B cell (primary cell): ENCODE measurements at regions of chr22 and their contacts with region 1.

Region 1: DNA sequence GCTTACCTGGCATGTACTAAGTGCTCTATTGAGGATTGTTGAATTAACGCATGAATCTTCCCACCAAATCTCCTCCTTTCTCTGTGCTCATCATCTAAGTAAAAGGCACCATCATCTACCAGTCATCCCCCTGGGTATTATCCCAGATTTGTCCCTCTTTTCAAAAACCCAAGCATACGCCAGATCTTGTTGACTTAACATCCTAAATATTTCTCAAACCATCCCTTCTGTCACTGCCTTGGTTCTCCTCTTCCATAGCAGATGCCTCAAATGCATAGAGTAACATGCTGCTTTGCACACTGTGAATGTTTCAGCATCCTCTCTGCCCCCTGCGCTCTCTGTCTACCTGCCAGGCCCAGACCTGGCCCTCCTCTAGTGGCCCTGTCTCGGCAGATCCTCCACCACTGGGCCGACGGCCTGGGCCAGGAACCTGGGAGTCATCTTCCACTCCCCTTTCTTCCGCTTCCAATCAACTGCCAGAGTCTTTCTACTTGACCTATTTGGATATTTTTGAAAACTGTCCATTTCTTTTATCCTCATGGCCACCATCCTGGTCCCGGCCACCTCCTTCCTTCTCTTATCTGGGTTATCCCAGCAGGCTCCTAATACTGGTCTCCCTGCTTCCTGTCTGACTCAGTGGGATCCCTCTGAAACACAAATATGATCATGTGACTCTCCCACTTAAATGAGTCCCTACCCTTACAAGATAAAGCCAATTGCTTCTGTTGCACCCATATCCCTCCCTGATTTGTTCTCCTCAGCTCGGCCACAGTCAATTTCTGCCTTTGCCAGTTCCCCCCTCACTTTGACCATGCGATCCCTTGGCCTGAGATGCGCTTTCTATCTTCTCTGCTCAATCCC is 3.4 kb upstream of the TAB1 start:
- DNase-seq: no peak
- ATAC-seq: no peak
- H3K4me3 ChIP-seq: no peak overlapping the region
- H3K4me3 Mint-ChIP-seq: no peak overlapping the region
- H3K27ac ChIP-seq: no peak overlapping the region
- H3K27ac Mint-ChIP-seq: no peak overlapping the region
- H3K4me1 ChIP-seq: peaks cover 9 to 16% of the 10 kb centered on the region in 2 donors
- H3K4me1 Mint-ChIP-seq: peaks cover 15% of the 10 kb centered on the region
- H3K27me3 ChIP-seq: no peaks in the 10 kb centered on the region
- H3K27me3 Mint-ChIP-seq: no peaks in the 10 kb centered on the region
- CTCF ChIP-seq: no peak

Region 2: GRCh38 chr22:38843201-38843715 is 552.9 kb before region 1 on chr22:
- CTCF ChIA-PET with region 1: no interaction called
- POLR2A ChIA-PET with region 1: no interaction called
- intact Hi-C with region 1: no loop called
- DNase-seq: peak; percentile 77
- ATAC-seq: peak; percentile 78
- H3K4me3 ChIP-seq: peak overlapping the region in 2 of 5 experiments; percentile 23 to 29
- H3K4me3 Mint-ChIP-seq: peak overlapping the region; percentile 19
- H3K27ac ChIP-seq: no peak overlapping the region
- H3K27ac Mint-ChIP-seq: no peak overlapping the region
- H3K4me1 ChIP-seq: peaks cover 6 to 13% of the 10 kb centered on the region in 2 donors
- H3K4me1 Mint-ChIP-seq: peaks cover 11% of the 10 kb centered on the region
- H3K27me3 ChIP-seq: peaks cover 0 to 56% (median 27%) of the 10 kb centered on the region in 4 experiments
- H3K27me3 Mint-ChIP-seq: peaks cover 62% of the 10 kb centered on the region
- CTCF ChIP-seq: no peak

Region 3: DNA sequence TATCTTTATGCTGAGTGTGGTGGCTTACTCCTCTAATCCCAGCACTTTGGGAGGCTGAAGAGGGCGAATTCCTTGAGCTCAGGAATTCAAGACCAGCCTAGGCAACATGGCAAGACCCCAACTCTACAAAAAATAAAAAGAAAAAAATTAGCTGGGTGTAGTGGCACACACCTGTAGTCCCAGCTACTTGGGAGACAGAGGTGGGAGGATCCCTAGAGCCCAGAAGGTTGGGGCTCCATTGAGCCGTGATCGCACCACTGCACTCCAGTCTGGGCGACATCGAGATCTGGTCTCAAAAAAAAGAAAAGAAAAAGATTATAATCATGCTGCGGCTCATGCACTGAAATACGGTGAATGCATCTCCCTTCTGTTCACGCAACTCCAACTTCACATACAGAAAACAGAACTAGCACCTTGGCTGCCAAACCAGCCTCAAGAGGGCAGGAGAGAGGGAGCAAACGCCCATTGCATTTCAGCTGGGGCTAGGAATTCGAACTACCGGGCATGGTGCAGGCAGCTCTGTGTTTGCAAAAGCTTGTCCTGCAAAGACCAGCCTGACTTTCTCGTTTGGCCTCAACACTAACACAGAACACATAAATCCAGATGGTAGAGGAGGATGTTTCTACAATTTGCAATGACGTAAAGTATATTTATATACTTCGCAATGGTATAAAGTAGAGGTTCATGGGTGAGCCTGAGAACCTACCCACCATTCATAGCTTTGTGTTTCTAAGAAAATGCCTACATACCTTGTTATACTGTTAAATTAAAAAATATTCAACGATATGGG is 52.7 kb before region 1 on chr22:
- CTCF ChIA-PET with region 1: interaction called, 18 read pairs
- POLR2A ChIA-PET with region 1: no interaction called
- intact Hi-C with region 1: loop called (anchors 1 kb)
- DNase-seq: peak; percentile 76
- ATAC-seq: peak; percentile 90
- H3K4me3 ChIP-seq: no peak overlapping the region
- H3K4me3 Mint-ChIP-seq: no peak overlapping the region
- H3K27ac ChIP-seq: no peak overlapping the region
- H3K27ac Mint-ChIP-seq: no peak overlapping the region
- H3K4me1 ChIP-seq: peaks cover 6 to 8% of the 10 kb centered on the region in 2 donors
- H3K4me1 Mint-ChIP-seq: peaks cover 4% of the 10 kb centered on the region
- H3K27me3 ChIP-seq: peaks cover 0 to 10% (median 0%) of the 10 kb centered on the region in 4 experiments
- H3K27me3 Mint-ChIP-seq: peaks cover 10% of the 10 kb centered on the region
- CTCF ChIP-seq: peak; percentile 85

Region 4: GRCh38 chr22:39414886-39415285 is 18.7 kb after region 1 on chr22:
- CTCF ChIA-PET with region 1: interaction called, 11 read pairs
- POLR2A ChIA-PET with region 1: no interaction called
- intact Hi-C with region 1: no loop called
- DNase-seq: no peak
- ATAC-seq: no peak
- H3K4me3 ChIP-seq: no peak overlapping the region
- H3K4me3 Mint-ChIP-seq: no peak overlapping the region
- H3K27ac ChIP-seq: no peak overlapping the region
- H3K27ac Mint-ChIP-seq: no peak overlapping the region
- H3K4me1 ChIP-seq: peaks cover 8 to 16% of the 10 kb centered on the region in 2 donors
- H3K4me1 Mint-ChIP-seq: peaks cover 18% of the 10 kb centered on the region
- H3K27me3 ChIP-seq: no peaks in the 10 kb centered on the region
- H3K27me3 Mint-ChIP-seq: no peaks in the 10 kb centered on the region
- CTCF ChIP-seq: no peak

Region 5: GRCh38 chr22:39490135-39490798 is 94.1 kb after region 1 on chr22:
- CTCF ChIA-PET with region 1: interaction called, 10 read pairs
- POLR2A ChIA-PET with region 1: interaction called, 3 read pairs
- intact Hi-C with region 1: no loop called
- DNase-seq: peak; percentile 86
- ATAC-seq: peak; percentile 98
- H3K4me3 ChIP-seq: peak overlapping the region in 2 of 5 experiments; percentile 12 to 37
- H3K4me3 Mint-ChIP-seq: peak overlapping the region; percentile 59
- H3K27ac ChIP-seq: no peak overlapping the region
- H3K27ac Mint-ChIP-seq: peak overlapping the region; percentile 79
- H3K4me1 ChIP-seq: peaks cover 4 to 14% of the 10 kb centered on the region in 2 donors
- H3K4me1 Mint-ChIP-seq: peaks cover 21% of the 10 kb centered on the region
- H3K27me3 ChIP-seq: no peaks in the 10 kb centered on the region
- H3K27me3 Mint-ChIP-seq: no peaks in the 10 kb centered on the region
- CTCF ChIP-seq: no peak

Region 6: GRCh38 chr22:39502109-39502788 is 106.1 kb after region 1 on chr22 and contains the start of gene MIEF1:
- CTCF ChIA-PET with region 1: interaction called, 13 read pairs
- POLR2A ChIA-PET with region 1: interaction called, 11 read pairs
- intact Hi-C with region 1: loop called (anchors 1 kb)
- DNase-seq: peak; percentile 93
- ATAC-seq: peak; percentile 98
- H3K4me3 ChIP-seq: peak within 1 kb of the TSS; percentile 48 to 85 (median 83)
- H3K4me3 Mint-ChIP-seq: peak within 1 kb of the TSS; percentile 96
- H3K27ac ChIP-seq: peak within 1 kb of the TSS; percentile 45 to 74
- H3K27ac Mint-ChIP-seq: peak within 1 kb of the TSS; percentile 93
- H3K4me1 ChIP-seq: peaks cover 16 to 25% of the 10 kb centered on the region in 2 donors
- H3K4me1 Mint-ChIP-seq: peaks cover 39% of the 10 kb centered on the region
- H3K27me3 ChIP-seq: no peaks in the 10 kb centered on the region
- H3K27me3 Mint-ChIP-seq: no peaks in the 10 kb centered on the region
- CTCF ChIP-seq: no peak
- total RNA-seq, gene MIEF1: 37.2 and 43.4 TPM in 2 replicates